Activated naive CD4-positive, alpha-beta T cell treated with anti-CD3 and anti-CD28 coated beads for 36 hours (primary cell): ENCODE measurements at regions of chr2 and their contacts with region 1.

Region 1: GRCh38 chr2:136527560-136527959 is 237.8 kb upstream of the THSD7B start:
- DNase-seq: peak; percentile 23
- H3K4me3 Mint-ChIP-seq: no peak overlapping the region
- H3K27ac Mint-ChIP-seq: no peak overlapping the region
- H3K4me1 Mint-ChIP-seq: no peaks in the 10 kb centered on the region
- H3K27me3 Mint-ChIP-seq: no peaks in the 10 kb centered on the region

Region 2: DNA sequence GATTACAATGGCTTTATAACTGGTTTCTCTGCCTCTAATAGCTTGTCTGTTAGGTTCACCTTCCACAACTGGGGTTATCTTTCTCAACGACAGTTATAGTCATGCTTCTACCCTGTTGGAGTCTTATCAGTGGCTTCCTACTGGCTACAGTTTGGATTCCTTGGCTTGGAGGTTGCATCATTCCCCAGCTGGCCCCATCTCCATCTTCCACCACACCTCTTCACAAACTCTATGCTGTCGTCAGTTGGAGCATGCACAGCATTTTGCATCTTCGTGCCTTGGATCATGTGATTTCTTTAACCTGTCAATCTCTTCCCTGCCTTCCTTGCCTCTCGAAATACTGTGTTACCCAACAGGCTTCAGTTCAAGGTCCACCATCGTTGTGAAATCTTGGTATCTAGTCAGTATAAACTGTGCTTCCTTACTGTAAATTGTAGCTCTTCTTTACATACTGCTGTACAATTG is 93.3 kb before region 1 on chr2:
- CTCF ChIA-PET with region 1: no interaction called
- intact Hi-C with region 1: no loop called
- DNase-seq: no peak
- H3K4me3 Mint-ChIP-seq: no peak overlapping the region
- H3K27ac Mint-ChIP-seq: no peak overlapping the region
- H3K4me1 Mint-ChIP-seq: no peaks in the 10 kb centered on the region
- H3K27me3 Mint-ChIP-seq: peaks cover 2% of the 10 kb centered on the region

Region 3: GRCh38 chr2:136582628-136583205 is 55.2 kb after region 1 on chr2:
- CTCF ChIA-PET with region 1: no interaction called
- intact Hi-C with region 1: loop called (anchors 1 kb)
- DNase-seq: peak; percentile 47
- H3K4me3 Mint-ChIP-seq: no peak overlapping the region
- H3K27ac Mint-ChIP-seq: no peak overlapping the region
- H3K4me1 Mint-ChIP-seq: no peaks in the 10 kb centered on the region
- H3K27me3 Mint-ChIP-seq: no peaks in the 10 kb centered on the region